GM12878 (cell line): ENCODE measurements at regions of chr3 and their contacts with region 1.

Region 1: DNA sequence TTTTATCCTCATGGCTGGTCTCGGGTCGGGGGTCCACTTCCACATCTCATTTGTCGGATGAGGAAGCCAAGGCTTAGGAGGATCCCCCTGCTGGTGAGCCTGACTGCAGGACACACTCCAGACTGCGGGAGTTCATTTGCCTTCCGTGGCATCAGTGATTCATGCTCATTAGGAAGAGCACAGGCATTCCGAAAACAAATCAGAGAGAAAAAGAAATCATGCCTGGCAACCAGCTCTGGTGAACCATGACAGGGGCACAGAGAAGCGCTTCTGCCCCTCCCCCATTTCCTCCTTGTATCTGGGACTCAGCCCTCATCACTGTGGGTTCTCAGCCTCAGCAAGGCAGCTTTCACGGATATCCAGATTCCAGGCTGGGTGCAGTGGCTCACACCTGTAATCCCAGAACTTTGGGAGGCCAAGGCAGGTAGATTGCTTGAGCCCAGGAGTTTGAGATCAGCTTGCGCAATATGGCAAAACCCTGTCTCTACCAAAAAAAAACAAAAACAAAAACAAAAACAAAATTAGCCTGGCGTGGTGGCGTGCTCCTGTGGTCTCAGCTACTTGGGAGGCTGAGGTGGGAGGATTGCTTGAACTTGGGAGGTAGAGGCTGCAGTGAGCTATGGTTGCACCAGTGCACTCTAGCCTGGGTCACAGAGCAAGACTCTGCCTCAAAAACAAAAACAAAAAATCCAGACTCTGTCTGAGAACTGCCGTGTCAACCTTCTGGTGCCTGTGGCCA is 28.4 kb downstream of the IRAK2 start:
- DNase-seq: peak; percentile 91
- ATAC-seq: peak; percentile 73
- H3K4me3 ChIP-seq: no peak overlapping the region
- H3K27ac ChIP-seq: peak overlapping the region; percentile 98
- H3K4me1 ChIP-seq: peaks cover 74% of the 10 kb centered on the region
- H3K27me3 ChIP-seq: no peaks in the 10 kb centered on the region
- CTCF ChIP-seq: peak; percentile 46 to 52 (median 50); a peak in 5 of 6 replicates
- EP300 ChIP-seq: peak in 1 of 2 experiments; percentile 52; a peak in 2 of 4 replicates
- POLR2A ChIP-seq: peak; percentile 19; the same call in 1 of the 2 replicates
- RAD21 ChIP-seq: peak; percentile 14; the same call in 1 of the 2 replicates

Region 2: DNA sequence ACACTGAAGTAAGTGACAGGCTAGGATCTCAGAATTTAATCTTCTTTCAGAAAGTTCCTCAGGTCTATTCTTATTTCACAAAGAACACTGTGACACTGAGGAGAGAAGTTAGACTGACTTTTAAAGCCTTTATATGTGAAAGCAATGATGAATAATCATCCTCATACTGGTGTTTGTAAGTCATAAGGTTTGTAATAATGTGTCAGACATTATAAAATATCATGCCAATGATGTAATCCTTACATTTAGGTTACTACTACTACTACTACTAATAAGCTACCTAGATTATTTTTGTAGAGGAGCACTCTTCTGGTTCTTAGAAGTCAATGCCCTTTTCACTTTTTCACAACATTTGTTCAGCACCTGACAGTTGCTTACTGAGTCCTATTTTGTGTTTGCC is 118.5 kb before region 1 on chr3:
- CTCF ChIA-PET with region 1: no interaction called
- POLR2A ChIA-PET with region 1: no interaction called
- RAD21 ChIA-PET with region 1: no interaction called
- SMC1A ChIA-PET with region 1: no interaction called
- in situ Hi-C with region 1: no loop called
- intact Hi-C with region 1: no loop called
- DNase-seq: no peak
- ATAC-seq: no peak
- H3K4me3 ChIP-seq: no peak overlapping the region
- H3K27ac ChIP-seq: no peak overlapping the region
- H3K4me1 ChIP-seq: no peaks in the 10 kb centered on the region
- H3K27me3 ChIP-seq: no peaks in the 10 kb centered on the region
- CTCF ChIP-seq: no peak
- EP300 ChIP-seq: no peak
- POLR2A ChIP-seq: no peak
- RAD21 ChIP-seq: no peak

Region 3: DNA sequence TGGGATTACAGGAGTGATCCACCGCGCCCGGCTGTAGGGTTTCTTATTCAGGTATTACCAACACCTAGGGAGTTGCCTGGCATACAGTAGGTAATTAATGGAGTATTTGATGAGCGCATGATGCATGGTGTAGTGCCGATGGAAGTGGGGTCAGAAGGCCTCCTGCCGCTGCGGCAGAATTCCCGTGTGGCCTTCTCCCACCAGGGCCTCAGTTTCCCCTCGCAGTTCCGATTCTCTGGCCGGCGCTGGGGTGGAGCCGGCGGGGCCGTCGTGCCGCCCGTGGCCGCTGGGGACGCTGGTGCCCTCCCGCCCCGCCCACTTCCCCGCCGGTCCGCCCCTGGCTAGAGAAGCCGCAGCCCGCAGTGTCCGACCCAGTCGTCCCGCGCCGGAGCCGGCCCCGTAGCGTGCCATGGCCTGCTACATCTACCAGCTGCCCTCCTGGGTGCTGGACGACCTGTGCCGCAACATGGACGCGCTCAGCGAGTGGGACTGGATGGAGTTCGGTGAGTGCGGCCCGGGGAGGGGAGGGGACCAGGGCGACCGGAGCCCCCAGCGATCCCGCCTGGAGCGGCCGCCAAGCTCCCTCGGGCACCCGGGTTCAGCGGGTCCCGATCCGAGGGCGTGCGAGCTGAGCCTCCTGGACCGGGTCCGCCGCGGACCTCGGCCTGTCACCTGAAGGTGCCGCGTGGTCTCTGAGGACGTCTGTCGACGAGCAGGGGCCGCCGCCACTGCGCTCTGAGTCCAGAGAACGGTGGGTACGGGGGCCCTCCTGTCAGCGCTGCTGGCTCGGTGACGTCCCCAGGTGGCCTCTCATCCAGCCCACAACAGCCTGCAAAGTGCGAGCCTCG is 28.4 kb before region 1 on chr3 and contains the start of gene IRAK2:
- CTCF ChIA-PET with region 1: interaction called, 19 read pairs
- POLR2A ChIA-PET with region 1: interaction called, 5 read pairs
- RAD21 ChIA-PET with region 1: interaction called, 24 read pairs
- SMC1A ChIA-PET with region 1: interaction called, 34 read pairs
- in situ Hi-C with region 1: no loop called
- intact Hi-C with region 1: loop called (anchors 2 kb)
- DNase-seq: no peak
- ATAC-seq: peak; percentile 92
- H3K4me3 ChIP-seq: peak within 1 kb of the TSS; percentile 94
- H3K27ac ChIP-seq: no peak within 1 kb of the TSS
- H3K4me1 ChIP-seq: peaks cover 7% of the 10 kb centered on the region; the same call in 1 of the 2 replicates
- H3K27me3 ChIP-seq: no peaks in the 10 kb centered on the region
- CTCF ChIP-seq: peak; percentile 76 to 86 (median 81)
- EP300 ChIP-seq: no peak
- POLR2A ChIP-seq: peak; percentile 79
- RAD21 ChIP-seq: peak; percentile 22; the same call in 1 of the 2 replicates
- polyA plus RNA-seq, gene IRAK2: 0.48 to 0.88 TPM

Region 4: GRCh38 chr3:10180738-10181295 is 12.3 kb before region 1 on chr3:
- CTCF ChIA-PET with region 1: interaction called, 11 read pairs
- POLR2A ChIA-PET with region 1: interaction called, 18 read pairs
- RAD21 ChIA-PET with region 1: interaction called, 12 read pairs
- SMC1A ChIA-PET with region 1: interaction called, 30 read pairs
- in situ Hi-C with region 1: no loop called
- intact Hi-C with region 1: no loop called
- DNase-seq: no peak
- ATAC-seq: peak; percentile 26
- H3K4me3 ChIP-seq: no peak overlapping the region
- H3K27ac ChIP-seq: peak overlapping the region; percentile 66
- H3K4me1 ChIP-seq: peaks cover 17% of the 10 kb centered on the region
- H3K27me3 ChIP-seq: no peaks in the 10 kb centered on the region
- CTCF ChIP-seq: no peak
- EP300 ChIP-seq: no peak
- POLR2A ChIP-seq: no peak
- RAD21 ChIP-seq: no peak

Region 5: GRCh38 chr3:10213156-10213792 is 20.2 kb after region 1 on chr3:
- CTCF ChIA-PET with region 1: interaction called, 5 read pairs
- POLR2A ChIA-PET with region 1: interaction called, 7 read pairs
- RAD21 ChIA-PET with region 1: interaction called, 11 read pairs
- SMC1A ChIA-PET with region 1: interaction called, 33 read pairs
- in situ Hi-C with region 1: no loop called
- intact Hi-C with region 1: no loop called
- DNase-seq: no peak
- ATAC-seq: peak; percentile 95
- H3K4me3 ChIP-seq: no peak overlapping the region
- H3K27ac ChIP-seq: no peak overlapping the region
- H3K4me1 ChIP-seq: no peaks in the 10 kb centered on the region
- H3K27me3 ChIP-seq: no peaks in the 10 kb centered on the region
- CTCF ChIP-seq: no peak
- EP300 ChIP-seq: 0 out of 4 replicates have a peak, but pooled peaks of 1 of the 2 experiments have one; percentile 20
- POLR2A ChIP-seq: no peak
- RAD21 ChIP-seq: no peak

Region 6: GRCh38 chr3:10224784-10225665 is 31.9 kb after region 1 on chr3:
- CTCF ChIA-PET with region 1: interaction called, 31 read pairs
- POLR2A ChIA-PET with region 1: interaction called, 64 read pairs
- RAD21 ChIA-PET with region 1: interaction called, 99 read pairs
- SMC1A ChIA-PET with region 1: interaction called, 165 read pairs
- in situ Hi-C with region 1: no loop called
- intact Hi-C with region 1: loop called (anchors 1 kb)
- DNase-seq: no peak
- ATAC-seq: peak; percentile 66
- H3K4me3 ChIP-seq: no peak overlapping the region
- H3K27ac ChIP-seq: peak overlapping the region; percentile 31
- H3K4me1 ChIP-seq: peaks cover 62% of the 10 kb centered on the region
- H3K27me3 ChIP-seq: no peaks in the 10 kb centered on the region
- CTCF ChIP-seq: peak; percentile 73 to 89 (median 87)
- EP300 ChIP-seq: no peak
- POLR2A ChIP-seq: no peak
- RAD21 ChIP-seq: peak; percentile 96